T-cell (primary cell): ENCODE measurements at regions of chr2 and their contacts with region 1.

Region 1: GRCh38 chr2:158443612-158444011 is 12.9 kb downstream of the CCDC148 start:
- DNase-seq: no peak
- ATAC-seq: no peak
- H3K4me3 ChIP-seq: no peak overlapping the region
- H3K4me3 Mint-ChIP-seq: no peak overlapping the region
- H3K27ac ChIP-seq: no peak overlapping the region
- H3K27ac Mint-ChIP-seq: no peak overlapping the region
- H3K4me1 ChIP-seq: no peaks in the 10 kb centered on the region
- H3K4me1 Mint-ChIP-seq: no peaks in the 10 kb centered on the region
- H3K27me3 ChIP-seq: peaks cover 0 to 2% of the 10 kb centered on the region in 2 experiments
- H3K27me3 Mint-ChIP-seq: no peaks in the 10 kb centered on the region

Region 2: GRCh38 chr2:159099483-159099882 is 655.9 kb after region 1 on chr2:
- CTCF ChIA-PET with region 1: no interaction called
- POLR2A ChIA-PET with region 1: interaction called in 1 of 2 experiments, 23 read pairs
- DNase-seq: no peak
- ATAC-seq: no peak
- H3K4me3 ChIP-seq: no peak overlapping the region
- H3K4me3 Mint-ChIP-seq: no peak overlapping the region
- H3K27ac ChIP-seq: no peak overlapping the region
- H3K27ac Mint-ChIP-seq: no peak overlapping the region
- H3K4me1 ChIP-seq: no peaks in the 10 kb centered on the region
- H3K4me1 Mint-ChIP-seq: peaks cover 4 to 5% (median 5%) of the 10 kb centered on the region in 3 donors
- H3K27me3 ChIP-seq: no peaks in the 10 kb centered on the region
- H3K27me3 Mint-ChIP-seq: no peaks in the 10 kb centered on the region